Upper lobe of right lung (tissue), 1 donor: ENCODE measurements at regions of chr4 and their contacts with region 1.

Region 1: GRCh38 chr4:74370912-74371311 is 6.0 kb downstream of the EREG start:
- DNase-seq: no peak
- ATAC-seq: peak; percentile 89
- H3K4me3 ChIP-seq: no peak overlapping the region
- H3K27ac ChIP-seq: no peak overlapping the region
- H3K4me1 ChIP-seq: peaks cover under 1% of the 10 kb centered on the region
- H3K27me3 ChIP-seq: peaks cover 13% of the 10 kb centered on the region
- CTCF ChIP-seq: peak; percentile 47

Region 2: GRCh38 chr4:74293558-74293957 is 77.4 kb before region 1 on chr4:
- intact Hi-C with region 1: no loop called
- DNase-seq: no peak
- ATAC-seq: no peak
- H3K4me3 ChIP-seq: no peak overlapping the region
- H3K27ac ChIP-seq: no peak overlapping the region
- H3K4me1 ChIP-seq: no peaks in the 10 kb centered on the region
- H3K27me3 ChIP-seq: no peaks in the 10 kb centered on the region
- CTCF ChIP-seq: no peak

Region 3: GRCh38 chr4:74675673-74676279 is 304.9 kb after region 1 on chr4:
- intact Hi-C with region 1: loop called (anchors 10 kb)
- DNase-seq: no peak
- ATAC-seq: peak; percentile 89
- H3K4me3 ChIP-seq: no peak overlapping the region
- H3K27ac ChIP-seq: no peak overlapping the region
- H3K4me1 ChIP-seq: no peaks in the 10 kb centered on the region
- H3K27me3 ChIP-seq: no peaks in the 10 kb centered on the region
- CTCF ChIP-seq: peak; percentile 69